OCI-LY7 (cell line): ENCODE measurements at regions of chrX and their contacts with region 1.

Region 1: DNA sequence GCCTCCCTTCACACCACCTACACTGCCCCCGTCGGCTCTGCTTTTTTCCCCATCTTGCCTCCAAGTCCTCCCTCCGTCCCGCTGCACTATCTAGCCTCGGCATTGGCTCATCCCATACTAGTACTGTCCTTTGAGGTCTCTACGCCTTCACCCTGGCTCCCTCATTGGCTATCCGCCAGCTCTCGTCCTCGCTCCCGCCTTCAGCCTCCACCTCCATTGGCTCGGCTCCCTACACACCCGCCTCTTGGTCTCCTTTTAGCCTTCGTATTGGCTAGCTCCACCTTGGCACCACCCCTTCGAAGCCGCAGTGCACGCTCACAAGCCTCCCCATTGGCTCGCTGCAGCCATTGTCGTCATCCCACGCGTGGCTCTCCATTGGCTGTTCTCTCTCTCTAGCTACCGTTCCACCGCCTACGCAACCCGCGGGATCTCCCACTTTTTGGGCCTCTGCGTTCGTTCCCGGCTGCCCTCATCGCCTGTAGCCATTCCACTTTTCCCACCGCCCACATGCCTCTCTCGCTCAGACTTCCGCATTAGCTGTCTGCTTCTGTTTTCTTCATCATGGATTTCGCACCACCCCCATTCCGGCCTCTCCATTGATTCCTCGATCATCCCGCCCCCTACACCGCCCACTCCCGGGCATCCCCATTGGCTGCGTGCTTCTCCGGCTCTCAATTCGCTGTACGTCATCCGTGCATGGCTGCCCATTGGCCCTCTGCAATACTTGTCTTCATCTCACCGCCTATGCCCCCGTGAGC is 404 bp upstream of the PPP1R3F start:
- DNase-seq: peak; percentile 96
- H3K4me3 ChIP-seq: peak overlapping the region; percentile 91
- H3K27ac ChIP-seq: peak overlapping the region; percentile 69
- H3K4me1 ChIP-seq: peaks cover 32% of the 10 kb centered on the region
- CTCF ChIP-seq: no peak

Region 2: DNA sequence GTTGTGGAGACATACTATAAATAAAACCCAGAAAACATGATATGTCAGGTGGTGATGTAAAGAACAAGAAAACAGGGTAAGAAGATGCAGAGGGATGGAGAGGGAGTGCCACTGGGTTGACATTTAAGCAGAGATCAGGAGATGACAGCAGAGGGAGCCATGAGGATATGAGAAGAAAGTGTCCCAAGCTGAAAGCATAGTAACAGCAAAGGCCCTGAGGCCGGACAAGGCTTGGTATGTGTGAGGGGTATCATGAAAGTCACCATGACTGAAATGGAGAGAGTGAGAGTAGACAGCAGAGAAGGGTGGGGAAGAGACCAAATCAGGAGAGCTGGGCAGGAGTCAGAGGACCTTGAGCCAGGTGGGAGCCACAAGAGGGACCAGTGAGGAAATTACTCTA is 149.1 kb before region 1 on chrX:
- CTCF ChIA-PET with region 1: no interaction called
- POLR2A ChIA-PET with region 1: interaction called, 6 read pairs
- intact Hi-C with region 1: loop called (anchors 10 kb)
- DNase-seq: no peak
- H3K4me3 ChIP-seq: no peak overlapping the region
- H3K27ac ChIP-seq: no peak overlapping the region
- H3K4me1 ChIP-seq: peaks cover 7% of the 10 kb centered on the region
- CTCF ChIP-seq: peak; percentile 32; the same call in 1 of the 2 replicates

Region 3: GRCh38 chrX:49191033-49191871 is 77.9 kb before region 1 on chrX:
- CTCF ChIA-PET with region 1: no interaction called
- POLR2A ChIA-PET with region 1: interaction called, 11 read pairs
- intact Hi-C with region 1: loop called (anchors 5 kb)
- DNase-seq: peak; percentile 97
- H3K4me3 ChIP-seq: peak overlapping the region; percentile 86
- H3K27ac ChIP-seq: peak overlapping the region; percentile 65
- H3K4me1 ChIP-seq: peaks cover 30% of the 10 kb centered on the region
- CTCF ChIP-seq: no peak